ENCODE measurements at regions of chr6 and their contacts with region 1.

Region 1: DNA sequence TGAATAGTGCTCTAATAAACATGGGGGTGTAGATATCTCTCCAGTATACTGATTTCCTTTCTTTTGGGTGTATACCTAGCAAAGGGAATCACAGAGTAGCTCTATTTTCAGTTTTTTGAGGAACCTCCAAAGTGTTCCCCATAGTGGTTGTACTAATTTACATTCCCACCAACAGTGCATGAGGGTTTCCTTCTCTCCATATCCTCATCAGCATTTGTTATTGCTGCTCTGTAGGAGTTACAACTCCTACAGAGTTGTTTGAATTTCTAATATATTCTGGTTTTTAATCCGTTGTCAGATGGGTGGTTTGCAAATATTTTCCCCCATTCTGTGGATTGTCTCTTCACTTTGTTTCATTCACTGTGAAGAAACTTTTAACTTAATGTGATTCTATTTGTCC is 207.9 kb downstream of the FUT9 start:
- DNase-seq: no peak
- ATAC-seq: no peak
- H3K4me3 ChIP-seq: no peak overlapping the region
- H3K27ac ChIP-seq: no peak overlapping the region
- H3K4me1 ChIP-seq: no peaks in the 10 kb centered on the region
- H3K27me3 ChIP-seq: no peaks in the 10 kb centered on the region
- CTCF ChIP-seq: no peak

Region 2: DNA sequence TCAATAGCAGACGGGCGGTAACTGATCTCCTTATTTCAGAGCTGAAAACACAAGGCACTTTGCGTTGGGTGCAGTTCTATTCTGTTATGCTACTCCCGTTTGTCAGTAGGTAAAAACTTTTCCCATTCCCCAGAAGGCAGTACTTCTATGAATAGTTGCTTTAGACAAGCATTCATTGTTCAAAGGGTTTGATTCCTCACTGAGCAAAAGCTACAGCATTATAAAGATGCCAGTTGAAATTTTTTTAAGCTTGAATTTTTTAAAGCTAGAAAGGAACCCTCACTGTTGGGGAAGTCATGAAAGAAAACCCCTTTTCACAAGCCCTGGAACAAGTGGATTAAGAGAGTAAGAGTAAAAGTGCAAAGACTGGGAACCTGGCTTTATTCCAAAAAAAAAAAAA is 165.6 kb before region 1 on chr6:
- CTCF ChIA-PET with region 1: interaction called, 14 read pairs
- POLR2A ChIA-PET with region 1: no interaction called
- in situ Hi-C with region 1: no loop called
- intact Hi-C with region 1: no loop called
- DNase-seq: no peak
- ATAC-seq: no peak
- H3K4me3 ChIP-seq: no peak overlapping the region
- H3K27ac ChIP-seq: no peak overlapping the region
- H3K4me1 ChIP-seq: no peaks in the 10 kb centered on the region
- H3K27me3 ChIP-seq: no peaks in the 10 kb centered on the region
- CTCF ChIP-seq: no peak

Region 3: GRCh38 chr6:96153775-96154174 is 69.9 kb before region 1 on chr6:
- CTCF ChIA-PET with region 1: no interaction called
- POLR2A ChIA-PET with region 1: no interaction called
- in situ Hi-C with region 1: no loop called
- intact Hi-C with region 1: no loop called
- DNase-seq: no peak
- ATAC-seq: no peak
- H3K4me3 ChIP-seq: no peak overlapping the region
- H3K27ac ChIP-seq: no peak overlapping the region
- H3K4me1 ChIP-seq: no peaks in the 10 kb centered on the region
- H3K27me3 ChIP-seq: no peaks in the 10 kb centered on the region
- CTCF ChIP-seq: no peak

Measured in Panc1 (cell line).